Gastrocnemius medialis (tissue), 4 donors: ENCODE measurements at regions of chr22 and their contacts with region 1.

Region 1: GRCh38 chr22:38176170-38176741 is 5.4 kb downstream of the PLA2G6 start:
- DNase-seq: peak; percentile 97 to 99
- ATAC-seq: peak; percentile 53 to 66
- H3K4me3 ChIP-seq: no peak overlapping the region
- H3K27ac ChIP-seq: peak overlapping the region; percentile 93 to 97 (median 96)
- H3K4me1 ChIP-seq: peaks cover 68 to 76% of the 10 kb centered on the region in 2 donors
- H3K27me3 ChIP-seq: no peaks in the 10 kb centered on the region
- CTCF ChIP-seq: peak in 1 of 5 experiments; percentile 27
- POLR2A ChIP-seq: peak; percentile 73 to 90

Region 2: GRCh38 chr22:38191731-38192474 is 15.6 kb after region 1 on chr22:
- in situ Hi-C with region 1: no loop called
- intact Hi-C with region 1: loop called (anchors 1 kb)
- DNase-seq: no peak
- ATAC-seq: no peak
- H3K4me3 ChIP-seq: no peak overlapping the region
- H3K27ac ChIP-seq: peak overlapping the region in 3 of 4 donors; percentile 20 to 75 (median 67)
- H3K4me1 ChIP-seq: peaks cover 16 to 31% of the 10 kb centered on the region in 2 donors
- H3K27me3 ChIP-seq: no peaks in the 10 kb centered on the region
- CTCF ChIP-seq: no peak
- POLR2A ChIP-seq: no peak